CD4-positive, alpha-beta T cell (primary cell): ENCODE measurements at regions of chr17 and their contacts with region 1.

Region 1: GRCh38 chr17:48500966-48501426 is 29.8 kb downstream of the HOXB1 start:
- DNase-seq: peak in 3 of 14 experiments; percentile 14 to 31 (median 31)
- ATAC-seq: no peak
- H3K4me3 ChIP-seq: no peak overlapping the region
- H3K4me3 Mint-ChIP-seq: no peak overlapping the region
- H3K27ac ChIP-seq: no peak overlapping the region
- H3K27ac Mint-ChIP-seq: no peak overlapping the region
- H3K4me1 ChIP-seq: no peaks in the 10 kb centered on the region
- H3K4me1 Mint-ChIP-seq: no peaks in the 10 kb centered on the region
- H3K27me3 ChIP-seq: no peaks in the 10 kb centered on the region
- H3K27me3 Mint-ChIP-seq: peaks cover 32% of the 10 kb centered on the region
- CTCF ChIP-seq: no peak

Region 2: GRCh38 chr17:48513097-48513496 is 12.1 kb after region 1 on chr17:
- CTCF ChIA-PET with region 1: no interaction called
- POLR2A ChIA-PET with region 1: no interaction called
- intact Hi-C with region 1: loop called in 1 of 2 experiments (anchors 1 kb)
- DNase-seq: peak in 4 of 14 experiments; percentile 36 to 62 (median 42)
- ATAC-seq: no peak
- H3K4me3 ChIP-seq: no peak overlapping the region
- H3K4me3 Mint-ChIP-seq: no peak overlapping the region
- H3K27ac ChIP-seq: no peak overlapping the region
- H3K27ac Mint-ChIP-seq: no peak overlapping the region
- H3K4me1 ChIP-seq: peaks cover 26% of the 10 kb centered on the region
- H3K4me1 Mint-ChIP-seq: peaks cover 11% of the 10 kb centered on the region
- H3K27me3 ChIP-seq: peaks cover 2 to 7% of the 10 kb centered on the region in 2 experiments
- H3K27me3 Mint-ChIP-seq: peaks cover 74% of the 10 kb centered on the region
- CTCF ChIP-seq: no peak

Region 3: DNA sequence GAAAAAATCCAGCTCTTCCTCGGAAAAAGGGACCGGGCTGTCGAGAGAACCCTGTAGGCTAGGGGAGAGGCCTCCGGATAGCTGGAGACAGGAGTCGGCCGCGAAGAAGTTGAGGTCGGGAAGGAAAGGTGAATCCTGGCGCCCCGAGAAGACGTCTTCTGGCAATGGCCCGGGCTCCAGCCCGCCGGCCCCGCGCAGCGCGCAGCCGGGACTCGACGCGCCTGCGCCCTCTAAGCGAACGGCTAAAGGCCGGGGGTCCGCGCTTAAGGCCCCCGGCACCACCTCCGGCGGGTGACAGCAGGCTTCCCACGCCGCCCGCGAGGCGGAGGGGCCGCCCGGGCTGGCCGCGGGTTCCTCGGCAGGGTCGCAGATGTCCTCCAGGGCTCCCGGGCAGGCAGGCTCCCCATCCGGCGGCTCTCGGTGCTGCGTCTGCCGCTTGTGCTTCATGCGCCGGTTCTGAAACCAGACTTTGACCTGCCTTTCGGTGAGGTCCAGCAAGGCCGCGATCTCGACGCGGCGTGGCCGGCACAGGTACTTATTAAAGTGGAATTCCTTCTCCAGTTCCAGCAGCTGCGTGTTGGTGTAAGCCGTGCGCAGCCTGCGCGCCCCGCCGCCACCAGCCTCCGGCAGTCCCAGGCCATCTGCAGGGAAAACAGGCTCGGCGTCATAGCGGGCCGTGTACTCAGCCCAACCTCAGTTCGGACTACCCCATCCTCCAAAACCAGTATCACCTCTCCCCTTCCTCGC is 42.3 kb after region 1 on chr17:
- CTCF ChIA-PET with region 1: no interaction called
- POLR2A ChIA-PET with region 1: no interaction called
- intact Hi-C with region 1: no loop called
- DNase-seq: peak; percentile 18 to 79 (median 50)
- ATAC-seq: peak; percentile 45
- H3K4me3 ChIP-seq: peak overlapping the region; percentile 88
- H3K4me3 Mint-ChIP-seq: peak overlapping the region; percentile 91
- H3K27ac ChIP-seq: peak overlapping the region; percentile 77 to 96
- H3K27ac Mint-ChIP-seq: peak overlapping the region; percentile 90
- H3K4me1 ChIP-seq: peaks cover 70% of the 10 kb centered on the region
- H3K4me1 Mint-ChIP-seq: peaks cover 54% of the 10 kb centered on the region
- H3K27me3 ChIP-seq: no peaks in the 10 kb centered on the region
- H3K27me3 Mint-ChIP-seq: peaks cover 80% of the 10 kb centered on the region
- CTCF ChIP-seq: no peak

Region 4: GRCh38 chr17:48555258-48556228 is 54.5 kb after region 1 on chr17:
- CTCF ChIA-PET with region 1: no interaction called
- POLR2A ChIA-PET with region 1: no interaction called
- intact Hi-C with region 1: no loop called
- DNase-seq: peak in 3 of 14 experiments; percentile 28 to 50 (median 50)
- ATAC-seq: peak; percentile 44
- H3K4me3 ChIP-seq: peak overlapping the region; percentile 48
- H3K4me3 Mint-ChIP-seq: peak overlapping the region; percentile 84
- H3K27ac ChIP-seq: no peak overlapping the region
- H3K27ac Mint-ChIP-seq: no peak overlapping the region
- H3K4me1 ChIP-seq: peaks cover 10% of the 10 kb centered on the region
- H3K4me1 Mint-ChIP-seq: peaks cover 5% of the 10 kb centered on the region
- H3K27me3 ChIP-seq: peaks cover 0 to 6% of the 10 kb centered on the region in 2 experiments
- H3K27me3 Mint-ChIP-seq: peaks cover 73% of the 10 kb centered on the region
- CTCF ChIP-seq: no peak

Region 5: GRCh38 chr17:48603959-48604769 is 103.2 kb after region 1 on chr17:
- CTCF ChIA-PET with region 1: no interaction called
- POLR2A ChIA-PET with region 1: no interaction called
- intact Hi-C with region 1: no loop called
- DNase-seq: no peak
- ATAC-seq: no peak
- H3K4me3 ChIP-seq: no peak overlapping the region
- H3K4me3 Mint-ChIP-seq: no peak overlapping the region
- H3K27ac ChIP-seq: no peak overlapping the region
- H3K27ac Mint-ChIP-seq: no peak overlapping the region
- H3K4me1 ChIP-seq: peaks cover 27% of the 10 kb centered on the region
- H3K4me1 Mint-ChIP-seq: peaks cover 18% of the 10 kb centered on the region
- H3K27me3 ChIP-seq: peaks cover 84 to 85% of the 10 kb centered on the region in 2 experiments
- H3K27me3 Mint-ChIP-seq: peaks cover 95% of the 10 kb centered on the region
- CTCF ChIP-seq: no peak